K562 (cell line): ENCODE measurements at regions of chr6 and their contacts with region 1.

Region 1: GRCh38 chr6:7910654-7911344 is at the start of gene TXNDC5:
- DNase-seq: peak; percentile 87 to 97 (median 95)
- ATAC-seq: peak; percentile 89
- H3K4me3 ChIP-seq: peak within 1 kb of the TSS; percentile 75
- H3K27ac ChIP-seq: peak within 1 kb of the TSS; percentile 77
- H3K4me1 ChIP-seq: peaks cover 28 to 56% of the 10 kb centered on the region in 2 experiments
- H3K27me3 ChIP-seq: peaks cover 8 to 24% of the 10 kb centered on the region in 2 experiments; a peak in 3 of 5 replicates
- CTCF ChIP-seq: no peak
- EP300 ChIP-seq: no peak
- POLR2A ChIP-seq: peak; percentile 53; the same call in 1 of the 2 replicates
- RAD21 ChIP-seq: peak in 1 of 2 experiments; percentile 9; a peak in 1 of 4 replicates
- polyA plus RNA-seq, gene TXNDC5: 33.9 to 44.0 TPM

Region 2: GRCh38 chr6:7794509-7794908 is 116.3 kb before region 1 on chr6:
- CTCF ChIA-PET with region 1: no interaction called
- POLR2A ChIA-PET with region 1: no interaction called
- in situ Hi-C with region 1: no loop called
- intact Hi-C with region 1: no loop called
- DNase-seq: no peak
- ATAC-seq: no peak
- H3K4me3 ChIP-seq: no peak overlapping the region
- H3K27ac ChIP-seq: no peak overlapping the region
- H3K4me1 ChIP-seq: no peaks in the 10 kb centered on the region
- H3K27me3 ChIP-seq: peaks cover 21 to 37% of the 10 kb centered on the region in 2 experiments
- CTCF ChIP-seq: no peak
- EP300 ChIP-seq: no peak
- POLR2A ChIP-seq: no peak
- RAD21 ChIP-seq: no peak

Region 3: DNA sequence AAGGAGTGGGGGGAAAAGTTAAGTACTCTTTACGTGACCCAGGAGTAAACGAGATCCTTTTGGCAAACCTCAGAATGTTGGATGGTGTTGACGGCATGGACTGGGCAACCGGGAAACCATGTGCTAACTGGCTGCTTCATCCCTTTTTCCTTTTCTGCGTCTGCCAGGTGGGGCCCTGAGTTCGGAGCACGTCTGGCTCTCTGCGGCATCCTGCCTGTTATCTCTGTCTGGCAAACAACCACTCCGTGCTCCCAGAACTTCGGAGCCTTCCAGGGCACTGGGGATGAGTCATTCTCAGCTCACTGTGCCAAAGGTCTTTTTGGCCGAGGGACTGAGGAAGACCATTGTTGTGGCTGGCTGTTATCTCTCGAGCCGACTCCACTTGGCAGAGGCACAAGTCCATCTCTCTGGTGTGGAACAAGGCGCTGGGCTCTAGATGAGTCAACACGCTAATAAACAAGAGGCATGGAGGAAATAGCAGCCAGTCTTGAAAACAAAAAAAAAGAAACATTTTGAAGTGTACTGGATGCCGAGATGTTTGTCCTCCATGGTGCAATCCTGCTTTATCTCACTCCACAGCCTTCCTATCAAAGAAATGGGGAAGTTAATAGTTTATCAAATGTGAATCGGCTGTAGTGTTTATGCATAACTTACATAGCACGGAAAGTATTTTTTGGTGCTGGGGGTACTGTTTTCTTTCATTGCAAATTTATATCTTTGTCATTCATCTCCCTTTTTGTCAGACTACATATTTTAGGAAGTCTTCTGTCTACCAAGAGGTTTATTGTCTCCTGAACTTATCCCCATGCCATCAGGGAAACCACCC is 64.4 kb after region 1 on chr6:
- CTCF ChIA-PET with region 1: no interaction called
- POLR2A ChIA-PET with region 1: no interaction called
- in situ Hi-C with region 1: no loop called
- intact Hi-C with region 1: loop called (anchors 5 kb)
- DNase-seq: peak; percentile 67 to 94 (median 81)
- ATAC-seq: peak; percentile 97
- H3K4me3 ChIP-seq: no peak overlapping the region
- H3K27ac ChIP-seq: no peak overlapping the region
- H3K4me1 ChIP-seq: peaks cover 7 to 20% of the 10 kb centered on the region in 2 experiments; a peak in 4 of 5 replicates
- H3K27me3 ChIP-seq: peaks cover 8 to 22% of the 10 kb centered on the region in 2 experiments
- CTCF ChIP-seq: peak in 1 of 3 experiments; percentile 6; a peak in 1 of 6 replicates
- EP300 ChIP-seq: peak; percentile 79
- POLR2A ChIP-seq: no peak
- RAD21 ChIP-seq: 0 out of 4 replicates have a peak, but pooled peaks have one; percentile 5 to 11